Heart right ventricle (tissue), 16 donors: ENCODE measurements at regions of chr11 and their contacts with region 1.

Region 1: GRCh38 chr11:111283945-111284481 is 14.3 kb upstream of the POU2AF3 start:
- DNase-seq: peak in 1 of 2 donors; percentile 33
- ATAC-seq: peak; percentile 43 to 79 (median 68)
- H3K4me3 ChIP-seq: no peak overlapping the region
- H3K27ac ChIP-seq: no peak overlapping the region
- H3K4me1 ChIP-seq: peaks cover 0 to 12% (median 3%) of the 10 kb centered on the region in 9 donors
- H3K27me3 ChIP-seq: peaks cover 0 to 8% (median 0%) of the 10 kb centered on the region in 7 donors
- CTCF ChIP-seq: no peak

Region 2: GRCh38 chr11:111422494-111423249 is 138.7 kb after region 1 on chr11:
- intact Hi-C with region 1: loop called (anchors 1 to 5 kb)
- DNase-seq: peak in 1 of 2 donors; percentile 45
- ATAC-seq: peak in 7 of 8 donors; percentile 61 to 79 (median 71)
- H3K4me3 ChIP-seq: no peak overlapping the region
- H3K27ac ChIP-seq: no peak overlapping the region
- H3K4me1 ChIP-seq: peaks cover 0 to 21% (median 8%) of the 10 kb centered on the region in 9 donors
- H3K27me3 ChIP-seq: peaks cover 0 to 18% (median 0%) of the 10 kb centered on the region in 7 donors
- CTCF ChIP-seq: peak; percentile 30 to 75 (median 70)

Region 3: GRCh38 chr11:111429066-111429506 is 145.1 kb after region 1 on chr11:
- intact Hi-C with region 1: loop called in 6 of 10 experiments (anchors 5 kb)
- DNase-seq: no peak
- ATAC-seq: peak in 1 of 8 donors; percentile 68
- H3K4me3 ChIP-seq: no peak overlapping the region
- H3K27ac ChIP-seq: no peak overlapping the region
- H3K4me1 ChIP-seq: no peaks in the 10 kb centered on the region
- H3K27me3 ChIP-seq: peaks cover 0 to 33% (median 5%) of the 10 kb centered on the region in 7 donors
- CTCF ChIP-seq: peak in 7 of 9 donors; percentile 44 to 69 (median 54)

Region 4: DNA sequence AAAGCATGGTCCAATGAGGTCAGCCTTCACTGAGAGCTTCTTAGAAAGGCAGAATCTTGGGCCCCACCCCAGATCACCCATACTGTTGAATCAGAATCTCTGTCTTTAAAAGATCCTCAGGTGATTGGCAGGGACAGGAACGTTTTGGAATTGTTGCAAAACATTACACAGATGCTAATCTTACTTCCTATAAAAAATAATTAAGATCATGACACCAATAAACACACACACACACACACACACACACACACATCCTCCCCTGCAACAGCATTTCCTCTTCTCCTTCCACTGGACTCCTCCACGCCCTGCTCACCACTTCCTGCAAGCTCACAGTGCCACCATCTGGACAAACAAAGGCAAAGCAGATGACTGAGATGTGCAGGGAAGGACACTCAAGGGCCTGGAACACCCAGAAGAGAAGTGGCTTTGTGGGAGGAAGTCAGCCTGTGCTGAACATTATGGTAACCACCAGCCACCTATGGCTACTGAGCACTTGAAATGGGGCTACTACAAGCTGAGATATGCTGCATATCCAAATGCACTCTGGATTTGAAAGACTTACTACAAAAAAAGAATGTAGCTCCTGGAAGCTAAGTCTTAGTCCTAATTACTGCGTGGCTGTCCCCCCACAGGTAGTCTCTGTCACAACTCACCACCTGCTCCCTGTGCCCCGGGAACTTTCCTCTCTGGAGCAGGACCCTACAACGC is 162.5 kb after region 1 on chr11:
- intact Hi-C with region 1: loop called in 9 of 10 experiments (anchors 1 to 5 kb)
- DNase-seq: peak; percentile 48 to 86
- ATAC-seq: peak; percentile 88 to 97 (median 96)
- H3K4me3 ChIP-seq: no peak overlapping the region
- H3K27ac ChIP-seq: peak overlapping the region in 5 of 10 donors; percentile 2 to 44 (median 21)
- H3K4me1 ChIP-seq: peaks cover 0 to 18% (median 12%) of the 10 kb centered on the region in 9 donors
- H3K27me3 ChIP-seq: peaks cover 0 to 11% (median 0%) of the 10 kb centered on the region in 7 donors
- CTCF ChIP-seq: peak; percentile 43 to 88 (median 77)